Activated naive CD8-positive, alpha-beta T cell treated with anti-CD3 and anti-CD28 coated beads, Interleukin-2, amount 10 ng/mL, durations not matched to agents 7 days and 5 days (primary cell): ENCODE measurements at regions of chr11 and their contacts with region 1.

Region 1: GRCh38 chr11:64304316-64305072 is 830 bp upstream of the ESRRA start:
- DNase-seq: peak; percentile 97
- ATAC-seq: peak; percentile 46
- H3K4me3 Mint-ChIP-seq: peak overlapping the region; percentile 87
- H3K27ac Mint-ChIP-seq: peak overlapping the region; percentile 98
- H3K4me1 Mint-ChIP-seq: peaks cover 25% of the 10 kb centered on the region
- H3K27me3 Mint-ChIP-seq: peaks cover 25% of the 10 kb centered on the region

Region 2: DNA sequence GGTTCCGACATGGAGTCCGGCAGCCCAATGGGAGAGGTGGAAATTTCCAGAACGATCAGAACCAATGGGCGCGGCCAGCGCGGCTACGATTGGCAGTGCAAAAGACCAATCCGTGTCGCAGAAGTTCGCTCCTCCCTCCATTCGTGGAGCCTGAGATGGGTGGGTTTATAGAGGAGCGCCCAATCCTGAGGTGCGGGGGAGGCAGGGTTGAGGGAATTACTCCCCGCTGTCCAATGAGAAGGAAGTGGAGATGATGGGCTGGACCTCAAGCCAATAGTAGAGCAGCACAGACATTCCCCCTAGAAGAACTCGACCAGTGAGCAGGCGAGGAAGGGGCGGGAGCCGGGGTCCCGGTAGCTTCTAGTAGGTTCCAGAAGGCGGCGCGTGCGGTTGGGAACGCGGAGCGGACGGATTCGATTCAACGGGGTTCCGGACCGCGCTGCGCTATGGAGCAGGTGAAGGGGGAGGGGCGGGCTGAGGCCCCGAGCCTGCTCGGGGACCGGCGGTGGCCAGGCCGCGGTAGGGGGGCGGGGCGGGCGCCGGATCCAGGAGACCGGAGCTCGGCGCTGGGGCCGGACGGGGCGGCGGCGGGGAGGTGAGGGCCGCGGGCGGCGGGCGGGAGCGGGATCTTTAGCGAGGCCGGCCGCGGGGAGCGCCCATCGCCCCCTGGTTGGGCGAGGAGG is 118.5 kb before region 1 on chr11 and contains the start of gene STIP1:
- POLR2A ChIA-PET with region 1: interaction called, 26 read pairs
- DNase-seq: peak; percentile 95
- ATAC-seq: peak; percentile 92
- H3K4me3 Mint-ChIP-seq: peak within 1 kb of the TSS; percentile 99
- H3K27ac Mint-ChIP-seq: peak within 1 kb of the TSS; percentile 100
- H3K4me1 Mint-ChIP-seq: peaks cover 38% of the 10 kb centered on the region
- H3K27me3 Mint-ChIP-seq: no peaks in the 10 kb centered on the region
- total RNA-seq, gene STIP1: 218 to 219 TPM

Region 3: GRCh38 chr11:64240394-64241174 is 63.9 kb before region 1 on chr11 and contains the start of gene FKBP2:
- POLR2A ChIA-PET with region 1: interaction called, 16 read pairs
- DNase-seq: peak; percentile 99
- ATAC-seq: peak; percentile 75
- H3K4me3 Mint-ChIP-seq: peak within 1 kb of the TSS; percentile 96
- H3K27ac Mint-ChIP-seq: peak within 1 kb of the TSS; percentile 98
- H3K4me1 Mint-ChIP-seq: peaks cover 24% of the 10 kb centered on the region
- H3K27me3 Mint-ChIP-seq: no peaks in the 10 kb centered on the region
- total RNA-seq, gene FKBP2: 27.7 to 28.1 TPM

Region 4: GRCh38 chr11:64259533-64260067 is 44.9 kb before region 1 on chr11:
- POLR2A ChIA-PET with region 1: no interaction called
- DNase-seq: no peak
- ATAC-seq: no peak
- H3K4me3 Mint-ChIP-seq: no peak overlapping the region
- H3K27ac Mint-ChIP-seq: no peak overlapping the region
- H3K4me1 Mint-ChIP-seq: peaks cover 7% of the 10 kb centered on the region
- H3K27me3 Mint-ChIP-seq: no peaks in the 10 kb centered on the region

Region 5: DNA sequence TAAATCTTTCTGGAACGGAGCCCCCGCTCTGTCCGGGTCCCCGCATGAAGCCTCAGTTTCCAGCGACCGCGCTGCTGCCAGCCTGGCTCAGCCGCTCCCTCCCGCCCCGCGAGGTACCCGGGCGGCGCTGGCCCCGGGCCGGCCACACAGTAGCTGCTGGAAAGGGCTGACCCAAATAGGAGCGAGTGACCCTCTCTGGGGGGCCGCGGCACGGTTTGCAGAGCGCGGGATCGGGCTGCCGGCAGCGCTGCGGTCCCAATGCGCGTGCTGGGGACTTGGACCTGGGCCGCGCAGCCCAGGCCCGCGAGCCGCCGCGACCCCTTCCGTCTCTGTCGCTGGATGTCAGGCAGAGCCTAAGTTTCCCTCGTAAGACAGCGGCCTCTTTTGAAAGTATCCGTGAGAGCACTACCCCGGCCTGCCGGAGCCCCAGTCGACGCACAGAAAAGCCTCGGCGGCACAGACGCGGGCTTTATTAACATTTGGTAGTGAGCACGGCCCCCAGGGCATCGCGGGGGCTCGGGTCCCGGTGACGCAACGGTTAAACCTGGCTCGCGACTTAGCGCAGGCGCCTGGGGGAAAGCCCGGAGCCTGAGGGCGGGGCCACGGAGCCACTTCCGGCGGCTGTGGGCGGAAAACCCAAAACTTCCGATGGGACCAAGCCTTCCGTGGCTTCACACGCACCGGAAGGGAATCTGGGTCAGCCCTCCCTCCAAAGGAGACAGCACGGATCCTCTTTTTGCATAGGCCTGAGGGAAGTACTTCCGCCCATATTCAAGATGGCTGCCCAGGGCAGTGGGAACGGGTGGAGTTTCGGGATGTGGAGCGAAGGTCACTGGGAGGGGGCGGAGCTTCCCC is 34.9 kb before region 1 on chr11:
- POLR2A ChIA-PET with region 1: interaction called, 45 read pairs
- DNase-seq: peak; percentile 99
- ATAC-seq: peak; percentile 69
- H3K4me3 Mint-ChIP-seq: peak overlapping the region; percentile 96
- H3K27ac Mint-ChIP-seq: peak overlapping the region; percentile 96
- H3K4me1 Mint-ChIP-seq: peaks cover 23% of the 10 kb centered on the region
- H3K27me3 Mint-ChIP-seq: no peaks in the 10 kb centered on the region

Region 6: DNA sequence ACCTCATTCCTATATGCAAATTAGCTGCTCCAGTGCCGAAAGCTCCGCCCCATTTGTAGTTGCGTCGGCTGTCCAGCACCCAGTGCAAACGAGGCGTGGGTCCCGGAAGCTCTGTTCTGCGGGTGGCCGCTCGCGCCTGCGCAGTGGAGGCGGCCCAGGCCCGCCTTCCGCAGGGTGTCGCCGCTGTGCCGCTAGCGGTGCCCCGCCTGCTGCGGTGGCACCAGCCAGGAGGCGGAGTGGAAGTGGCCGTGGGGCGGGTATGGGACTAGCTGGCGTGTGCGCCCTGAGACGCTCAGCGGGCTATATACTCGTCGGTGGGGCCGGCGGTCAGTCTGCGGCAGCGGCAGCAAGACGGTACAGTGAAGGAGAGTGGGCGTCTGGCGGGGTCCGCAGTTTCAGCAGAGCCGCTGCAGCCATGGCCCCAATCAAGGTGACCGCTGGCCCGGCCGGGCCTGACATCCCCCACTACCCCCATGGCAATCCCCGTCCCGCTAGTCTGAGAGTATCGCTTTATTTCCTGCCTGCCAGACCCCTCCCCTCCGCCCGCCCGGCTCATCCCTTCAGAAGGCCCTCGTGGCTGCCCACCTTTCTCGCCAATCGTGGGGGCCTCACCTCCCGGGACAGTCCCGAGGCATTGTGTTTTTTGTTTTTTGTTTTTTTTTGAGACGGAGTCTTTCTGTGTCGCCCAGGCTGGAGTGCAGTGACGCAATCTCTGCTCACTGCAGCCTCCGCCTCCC is 13.6 kb after region 1 on chr11 and contains the start of gene PRDX5:
- POLR2A ChIA-PET with region 1: interaction called, 35 read pairs
- DNase-seq: peak; percentile 97
- ATAC-seq: peak; percentile 82
- H3K4me3 Mint-ChIP-seq: peak within 1 kb of the TSS; percentile 87
- H3K27ac Mint-ChIP-seq: peak within 1 kb of the TSS; percentile 97
- H3K4me1 Mint-ChIP-seq: peaks cover 23% of the 10 kb centered on the region
- H3K27me3 Mint-ChIP-seq: no peaks in the 10 kb centered on the region
- total RNA-seq, gene PRDX5: 85.1 to 91.2 TPM